Activated T-helper 2 cell treated with anti-CD3 and anti-CD28 coated beads, Interferon-gamma antibody, Interleukin-2, Interleukin-4, amounts not matched to agents 10 μg/mL and 5 μg/mL and 100 μg/mL, durations not matched to agents 14 hours and 24 hours and 36 hours (primary cell): ENCODE measurements at regions of chr6 and their contacts with region 1.

Region 1: GRCh38 chr6:24581084-24581669 is 64.8 kb downstream of the KIAA0319 start:
- DNase-seq: peak; percentile 52
- H3K4me3 Mint-ChIP-seq: no peak overlapping the region
- H3K27ac Mint-ChIP-seq: no peak overlapping the region
- H3K4me1 Mint-ChIP-seq: peaks cover 5% of the 10 kb centered on the region
- H3K27me3 Mint-ChIP-seq: peaks cover 8% of the 10 kb centered on the region

Region 2: GRCh38 chr6:24431045-24431451 is 150.1 kb before region 1 on chr6:
- intact Hi-C with region 1: no loop called
- DNase-seq: no peak
- H3K4me3 Mint-ChIP-seq: no peak overlapping the region
- H3K27ac Mint-ChIP-seq: no peak overlapping the region
- H3K4me1 Mint-ChIP-seq: peaks cover 2% of the 10 kb centered on the region
- H3K27me3 Mint-ChIP-seq: no peaks in the 10 kb centered on the region

Region 3: DNA sequence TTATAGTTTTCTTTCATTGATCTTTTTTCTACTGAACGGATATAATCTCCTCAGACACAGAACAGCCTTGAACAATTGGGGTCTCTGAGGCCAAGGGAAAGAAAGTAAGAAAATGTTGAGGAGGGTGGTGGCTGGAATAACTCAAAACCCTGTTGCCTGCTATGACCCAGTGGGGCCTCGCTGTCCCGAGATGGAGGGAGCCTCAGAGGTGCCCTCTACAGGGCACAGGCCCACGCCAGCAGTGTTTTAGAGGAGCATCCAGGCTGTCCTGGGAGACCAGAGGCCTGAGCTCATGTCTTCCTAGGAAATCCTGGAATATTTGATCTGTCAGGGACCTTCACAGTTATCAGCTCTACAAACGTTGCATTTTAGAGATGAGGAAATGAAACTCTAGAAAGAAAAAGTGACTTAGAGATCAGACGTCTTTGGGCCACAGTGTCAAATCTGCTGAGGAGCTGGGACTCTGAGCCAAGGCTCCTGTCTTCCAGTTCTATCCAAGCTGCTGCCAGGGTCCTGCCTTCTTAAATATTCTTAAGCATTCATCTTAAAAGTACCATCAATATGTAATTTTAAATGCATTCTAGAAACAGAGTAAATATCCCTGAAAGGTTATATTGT is 60.1 kb before region 1 on chr6:
- intact Hi-C with region 1: loop called (anchors 5 kb)
- DNase-seq: no peak
- H3K4me3 Mint-ChIP-seq: no peak overlapping the region
- H3K27ac Mint-ChIP-seq: no peak overlapping the region
- H3K4me1 Mint-ChIP-seq: peaks cover 14% of the 10 kb centered on the region
- H3K27me3 Mint-ChIP-seq: no peaks in the 10 kb centered on the region

Region 4: GRCh38 chr6:24689964-24690363 is 108.8 kb after region 1 on chr6:
- intact Hi-C with region 1: loop called (anchors 1 kb)
- DNase-seq: no peak
- H3K4me3 Mint-ChIP-seq: no peak overlapping the region
- H3K27ac Mint-ChIP-seq: no peak overlapping the region
- H3K4me1 Mint-ChIP-seq: peaks cover 14% of the 10 kb centered on the region
- H3K27me3 Mint-ChIP-seq: no peaks in the 10 kb centered on the region

Region 5: DNA sequence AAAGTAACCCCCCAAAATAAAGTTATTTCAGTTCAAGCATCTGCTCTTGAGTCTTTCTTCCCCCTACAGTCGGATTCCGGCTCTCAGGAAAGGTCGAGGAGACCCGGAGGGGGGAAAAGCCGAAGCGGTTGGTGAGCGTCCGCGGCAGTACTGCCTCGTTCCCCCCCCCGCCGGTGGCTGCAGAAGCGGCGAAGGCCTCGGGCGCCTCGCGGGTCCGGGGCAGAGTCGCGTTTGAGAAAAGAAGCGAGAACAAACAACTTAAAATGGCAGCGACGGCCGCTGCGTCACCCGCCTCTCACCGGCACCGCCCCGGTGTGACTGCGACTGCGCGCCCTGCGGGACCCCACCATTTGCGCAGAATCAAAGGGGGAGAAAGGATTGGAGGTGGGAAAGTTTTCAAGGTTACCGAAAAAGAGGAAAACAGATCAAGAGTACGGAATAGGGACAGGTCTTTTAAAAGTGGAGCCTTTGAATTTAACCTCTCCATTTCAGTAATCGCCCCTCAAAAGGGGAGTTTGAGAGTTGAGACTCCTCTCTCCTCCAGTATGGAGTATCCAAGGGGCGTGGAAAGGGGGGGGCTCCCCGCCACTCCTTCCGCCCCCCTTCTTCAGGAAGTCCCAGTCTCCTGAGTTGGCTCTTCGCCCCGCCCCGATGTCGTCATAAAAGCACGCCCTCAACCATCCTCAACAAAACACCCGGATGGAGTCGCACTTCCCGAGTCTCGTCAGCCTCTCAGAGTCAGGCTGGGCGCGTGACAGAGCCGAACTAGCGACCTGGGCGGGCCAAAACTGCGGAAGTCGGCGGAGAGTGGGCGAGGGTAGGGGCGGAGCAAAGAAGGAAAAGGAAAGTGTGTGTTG is 139.7 kb after region 1 on chr6:
- intact Hi-C with region 1: no loop called
- DNase-seq: peak; percentile 100
- H3K4me3 Mint-ChIP-seq: peak overlapping the region; percentile 99
- H3K27ac Mint-ChIP-seq: peak overlapping the region; percentile 100
- H3K4me1 Mint-ChIP-seq: peaks cover 33% of the 10 kb centered on the region
- H3K27me3 Mint-ChIP-seq: no peaks in the 10 kb centered on the region

Region 6: GRCh38 chr6:24766680-24767462 is 185.7 kb after region 1 on chr6:
- intact Hi-C with region 1: loop called (anchors 1 kb)
- DNase-seq: no peak
- H3K4me3 Mint-ChIP-seq: no peak overlapping the region
- H3K27ac Mint-ChIP-seq: no peak overlapping the region
- H3K4me1 Mint-ChIP-seq: peaks cover 8% of the 10 kb centered on the region
- H3K27me3 Mint-ChIP-seq: no peaks in the 10 kb centered on the region